SK-N-SH (cell line): ENCODE measurements at regions of chr17 and their contacts with region 1.

Region 1: DNA sequence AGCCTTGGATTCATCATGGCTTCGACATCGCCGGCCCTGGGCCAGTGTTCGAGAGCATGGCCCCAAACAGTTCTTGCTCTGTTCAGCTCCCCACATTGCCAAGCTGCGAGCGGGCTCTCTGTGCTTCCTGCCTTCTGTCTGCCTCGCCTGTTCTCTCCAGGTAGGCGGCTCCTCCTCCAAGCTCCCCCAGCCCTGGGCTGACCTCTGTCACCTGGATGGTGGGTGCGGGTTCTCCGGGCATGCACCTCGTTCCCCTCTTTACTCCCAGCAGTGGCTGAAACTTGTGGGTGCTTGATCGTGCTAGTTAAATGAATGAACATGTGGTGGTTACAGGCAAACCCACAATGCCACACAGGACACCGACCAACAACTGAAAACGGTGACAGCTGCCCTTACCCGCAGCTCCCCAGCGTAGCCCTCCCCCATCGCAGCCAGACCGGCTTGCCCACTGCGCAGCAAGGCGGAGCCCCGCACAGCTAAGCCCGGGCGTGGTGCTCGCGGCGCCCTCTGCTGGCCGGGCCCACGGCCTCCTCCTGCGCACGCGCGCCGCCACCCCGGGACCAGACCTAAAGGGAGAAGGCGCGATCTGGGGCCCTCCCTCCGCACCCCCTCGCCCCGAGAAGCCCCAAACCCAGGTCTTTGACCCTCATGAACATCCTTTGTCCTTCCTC is 23.0 kb upstream of the EIF1 start:
- DNase-seq: peak; percentile 96
- H3K4me3 ChIP-seq: peak overlapping the region; percentile 44 to 58
- H3K27ac ChIP-seq: peak overlapping the region; percentile 49 to 77
- H3K4me1 ChIP-seq: peaks cover 4 to 14% of the 10 kb centered on the region in 2 experiments; a peak in 2 of 4 replicates
- H3K27me3 ChIP-seq: no peaks in the 10 kb centered on the region; the same call in 1 of the 2 replicates
- CTCF ChIP-seq: peak; percentile 89
- EP300 ChIP-seq: no peak
- RAD21 ChIP-seq: peak; percentile 29; the same call in 1 of the 2 replicates

Region 2: GRCh38 chr17:40810505-40810904 is 855.2 kb before region 1 on chr17:
- CTCF ChIA-PET with region 1: interaction called, 44 read pairs
- POLR2A ChIA-PET with region 1: no interaction called
- DNase-seq: no peak
- H3K4me3 ChIP-seq: no peak overlapping the region
- H3K27ac ChIP-seq: no peak overlapping the region
- H3K4me1 ChIP-seq: no peaks in the 10 kb centered on the region
- H3K27me3 ChIP-seq: peaks cover 45% of the 10 kb centered on the region
- CTCF ChIP-seq: no peak
- EP300 ChIP-seq: no peak
- RAD21 ChIP-seq: no peak

Region 3: DNA sequence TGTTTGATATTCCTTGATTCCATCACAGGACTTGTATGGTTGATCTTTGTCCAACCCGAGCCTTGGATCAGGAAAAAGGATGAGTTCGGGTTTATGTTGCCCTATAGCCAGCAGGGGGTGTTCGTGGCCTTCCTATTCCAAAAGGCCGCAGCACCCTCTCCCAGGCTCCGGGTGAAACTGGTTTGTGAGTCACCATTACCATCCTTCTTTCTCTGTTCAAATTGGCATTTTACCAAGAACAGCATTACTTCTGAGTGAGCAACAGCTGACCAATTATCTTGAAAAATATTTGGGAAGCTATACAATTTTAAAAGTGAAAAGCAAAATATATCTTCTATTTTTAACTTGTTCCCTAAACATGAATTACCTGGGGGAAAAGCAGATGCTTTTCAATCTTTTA is 756.4 kb before region 1 on chr17:
- CTCF ChIA-PET with region 1: interaction called, 44 read pairs
- POLR2A ChIA-PET with region 1: no interaction called
- DNase-seq: peak; percentile 75
- H3K4me3 ChIP-seq: no peak overlapping the region; a peak in 1 of 4 replicates
- H3K27ac ChIP-seq: peak overlapping the region in 1 of 2 experiments; percentile 66; a peak in 2 of 4 replicates
- H3K4me1 ChIP-seq: peaks cover 0 to 14% of the 10 kb centered on the region in 2 experiments; a peak in 3 of 4 replicates
- H3K27me3 ChIP-seq: peaks cover 20% of the 10 kb centered on the region; the same call in 1 of the 2 replicates
- CTCF ChIP-seq: peak; percentile 84
- EP300 ChIP-seq: peak in 1 of 2 experiments; percentile 27; a peak in 1 of 4 replicates
- RAD21 ChIP-seq: peak; percentile 92

Region 4: GRCh38 chr17:41530062-41531051 is 135.3 kb before region 1 on chr17:
- CTCF ChIA-PET with region 1: interaction called, 12 read pairs
- POLR2A ChIA-PET with region 1: no interaction called
- DNase-seq: peak; percentile 93
- H3K4me3 ChIP-seq: no peak overlapping the region
- H3K27ac ChIP-seq: peak overlapping the region; percentile 94 to 99
- H3K4me1 ChIP-seq: peaks cover 24 to 38% of the 10 kb centered on the region in 2 experiments
- H3K27me3 ChIP-seq: no peaks in the 10 kb centered on the region
- CTCF ChIP-seq: no peak
- EP300 ChIP-seq: peak; percentile 95 to 97
- RAD21 ChIP-seq: peak; percentile 49

Region 5: DNA sequence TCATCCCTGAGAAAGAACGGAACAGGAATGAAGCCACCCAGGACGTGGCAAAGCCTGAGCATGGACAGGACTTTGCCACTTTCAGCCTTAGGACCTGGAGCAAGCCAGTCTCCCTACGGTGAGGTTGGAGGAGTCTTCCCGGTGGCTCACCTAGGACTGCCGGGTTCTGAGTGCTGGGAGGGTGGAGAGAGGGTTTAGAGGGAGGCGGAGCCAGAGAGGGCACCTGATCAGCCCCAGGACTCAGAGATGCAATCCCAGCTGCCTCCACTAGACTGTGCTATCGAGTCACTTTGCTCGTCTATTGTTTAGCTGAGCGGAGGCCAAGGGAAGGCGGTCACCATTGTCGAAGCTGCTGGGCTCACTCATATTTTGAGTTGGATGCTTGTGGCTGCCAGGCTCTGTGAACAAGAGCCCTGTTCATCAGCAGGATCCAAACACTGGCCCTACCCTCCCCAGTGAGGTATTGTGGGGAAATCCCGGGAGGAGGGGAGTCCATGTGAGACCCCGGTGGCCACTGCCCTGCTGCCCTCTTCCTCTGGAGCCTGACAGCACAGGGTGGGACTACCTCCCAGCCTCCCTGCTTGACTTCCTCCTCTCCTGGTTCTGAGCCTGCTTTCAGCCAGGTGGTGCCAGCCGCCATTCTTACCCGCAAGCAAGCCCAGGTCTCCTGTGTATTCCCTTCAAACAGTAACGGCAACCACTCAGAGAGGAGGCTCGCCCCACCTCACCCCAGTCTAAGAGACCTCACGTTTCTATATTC is 86.0 kb before region 1 on chr17:
- CTCF ChIA-PET with region 1: interaction called, 45 read pairs
- POLR2A ChIA-PET with region 1: interaction called, 3 read pairs
- DNase-seq: peak; percentile 90
- H3K4me3 ChIP-seq: no peak overlapping the region
- H3K27ac ChIP-seq: no peak overlapping the region
- H3K4me1 ChIP-seq: peaks cover 0 to 3% of the 10 kb centered on the region in 2 experiments; a peak in 1 of 4 replicates
- H3K27me3 ChIP-seq: no peaks in the 10 kb centered on the region; the same call in 1 of the 2 replicates
- CTCF ChIP-seq: peak; percentile 62
- EP300 ChIP-seq: no peak
- RAD21 ChIP-seq: peak; percentile 75

Region 6: DNA sequence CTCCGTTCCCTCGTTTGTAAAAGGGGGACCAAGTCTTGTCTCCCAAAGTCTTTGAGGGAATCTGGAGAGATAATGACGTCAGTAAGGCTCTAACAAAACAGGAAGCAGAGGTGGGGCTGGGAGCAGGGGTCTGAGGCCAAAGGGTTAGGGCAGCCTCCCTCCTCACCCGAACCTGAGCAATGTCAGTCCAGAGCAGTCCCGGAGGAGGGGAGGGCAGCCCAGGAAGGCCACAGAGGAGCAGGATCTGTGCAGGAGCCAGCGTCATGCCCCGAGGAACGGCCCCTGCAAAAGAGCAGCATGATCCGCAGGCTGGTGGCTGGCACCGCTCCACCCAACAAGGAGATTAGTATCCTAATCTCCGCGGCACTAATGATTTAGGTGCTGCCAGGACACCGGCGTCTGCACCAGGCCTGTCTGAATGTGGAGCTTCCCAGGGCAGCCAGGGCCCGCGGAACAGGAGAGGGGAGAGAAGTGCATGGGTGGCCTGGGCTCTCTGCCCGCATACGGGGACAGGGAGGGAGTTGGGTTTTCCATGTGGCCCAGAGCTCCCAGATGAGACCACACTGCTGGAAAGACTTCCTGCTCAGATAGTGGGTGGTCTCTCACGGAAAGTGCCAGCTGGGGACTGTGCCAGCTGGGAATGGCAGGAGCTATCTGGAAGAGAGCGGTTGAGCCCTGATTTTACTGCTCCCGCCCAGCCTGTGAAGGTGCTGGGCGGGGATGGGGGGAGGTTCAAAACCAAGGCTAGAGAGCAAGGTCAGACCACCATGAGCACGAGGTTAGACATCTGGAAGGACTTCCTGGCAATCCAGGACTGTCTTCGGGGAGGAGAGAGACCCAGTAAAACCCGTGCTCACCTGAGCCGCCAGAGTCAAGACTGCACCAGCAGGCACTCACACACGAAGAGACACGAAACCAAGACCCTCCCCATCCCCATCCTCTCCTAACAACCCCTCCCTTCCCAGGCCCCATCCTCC is 30.3 kb before region 1 on chr17:
- CTCF ChIA-PET with region 1: interaction called, 516 read pairs
- POLR2A ChIA-PET with region 1: no interaction called
- DNase-seq: peak; percentile 90
- H3K4me3 ChIP-seq: no peak overlapping the region
- H3K27ac ChIP-seq: peak overlapping the region in 1 of 2 experiments; percentile 84; a peak in 2 of 4 replicates
- H3K4me1 ChIP-seq: peaks cover 0 to 22% of the 10 kb centered on the region in 2 experiments; a peak in 2 of 4 replicates
- H3K27me3 ChIP-seq: no peaks in the 10 kb centered on the region
- CTCF ChIP-seq: no peak
- EP300 ChIP-seq: peak in 1 of 2 experiments; percentile 41; a peak in 1 of 4 replicates
- RAD21 ChIP-seq: no peak

Region 7: GRCh38 chr17:43431714-43432523 is 1766.2 kb after region 1 on chr17:
- CTCF ChIA-PET with region 1: no interaction called
- POLR2A ChIA-PET with region 1: no interaction called
- DNase-seq: no peak
- H3K4me3 ChIP-seq: no peak overlapping the region
- H3K27ac ChIP-seq: no peak overlapping the region
- H3K4me1 ChIP-seq: peaks cover 0 to 7% of the 10 kb centered on the region in 2 experiments; a peak in 1 of 4 replicates
- H3K27me3 ChIP-seq: no peaks in the 10 kb centered on the region
- CTCF ChIP-seq: no peak
- EP300 ChIP-seq: no peak
- RAD21 ChIP-seq: no peak